Pancreas (tissue), 10 donors: ENCODE measurements at regions of chr16 and their contacts with region 1.

Region 1: GRCh38 chr16:85086347-85087291 is 25.7 kb downstream of the CIBAR2 start:
- DNase-seq: peak in 4 of 6 donors; percentile 32 to 66 (median 52)
- ATAC-seq: peak; percentile 26 to 63 (median 41)
- H3K4me3 ChIP-seq: no peak overlapping the region
- H3K27ac ChIP-seq: no peak overlapping the region
- H3K4me1 ChIP-seq: peaks cover 12 to 16% (median 12%) of the 10 kb centered on the region in 3 donors
- H3K27me3 ChIP-seq: no peaks in the 10 kb centered on the region
- CTCF ChIP-seq: peak; percentile 21 to 44 (median 40)

Region 2: GRCh38 chr16:84868829-84869472 is 217.7 kb before region 1 on chr16:
- intact Hi-C with region 1: no loop called
- DNase-seq: no peak
- ATAC-seq: no peak
- H3K4me3 ChIP-seq: no peak overlapping the region
- H3K27ac ChIP-seq: no peak overlapping the region
- H3K4me1 ChIP-seq: no peaks in the 10 kb centered on the region
- H3K27me3 ChIP-seq: no peaks in the 10 kb centered on the region
- CTCF ChIP-seq: no peak

Region 3: GRCh38 chr16:84985079-84986065 is 101.2 kb before region 1 on chr16:
- intact Hi-C with region 1: loop called in 1 of 3 experiments (anchors 10 kb)
- DNase-seq: peak in 1 of 6 donors; percentile 44
- ATAC-seq: no peak
- H3K4me3 ChIP-seq: no peak overlapping the region
- H3K27ac ChIP-seq: no peak overlapping the region
- H3K4me1 ChIP-seq: peaks cover 0 to 10% (median 0%) of the 10 kb centered on the region in 3 donors
- H3K27me3 ChIP-seq: no peaks in the 10 kb centered on the region
- CTCF ChIP-seq: no peak